GM12878 (cell line): ENCODE measurements at regions of chrX and their contacts with region 1.

Region 1: GRCh38 chrX:149539283-149540130 is 1.3 kb upstream of the EOLA1 start:
- DNase-seq: peak; percentile 83
- ATAC-seq: peak; percentile 74
- H3K4me3 ChIP-seq: peak overlapping the region; percentile 44; the same call in 1 of the 2 replicates
- H3K27ac ChIP-seq: peak overlapping the region; percentile 18; the same call in 1 of the 2 replicates
- H3K4me1 ChIP-seq: peaks cover 4% of the 10 kb centered on the region; the same call in 1 of the 2 replicates
- H3K27me3 ChIP-seq: no peaks in the 10 kb centered on the region
- CTCF ChIP-seq: no peak
- EP300 ChIP-seq: no peak
- POLR2A ChIP-seq: no peak; the same call in 1 of the 2 replicates
- RAD21 ChIP-seq: no peak

Region 2: DNA sequence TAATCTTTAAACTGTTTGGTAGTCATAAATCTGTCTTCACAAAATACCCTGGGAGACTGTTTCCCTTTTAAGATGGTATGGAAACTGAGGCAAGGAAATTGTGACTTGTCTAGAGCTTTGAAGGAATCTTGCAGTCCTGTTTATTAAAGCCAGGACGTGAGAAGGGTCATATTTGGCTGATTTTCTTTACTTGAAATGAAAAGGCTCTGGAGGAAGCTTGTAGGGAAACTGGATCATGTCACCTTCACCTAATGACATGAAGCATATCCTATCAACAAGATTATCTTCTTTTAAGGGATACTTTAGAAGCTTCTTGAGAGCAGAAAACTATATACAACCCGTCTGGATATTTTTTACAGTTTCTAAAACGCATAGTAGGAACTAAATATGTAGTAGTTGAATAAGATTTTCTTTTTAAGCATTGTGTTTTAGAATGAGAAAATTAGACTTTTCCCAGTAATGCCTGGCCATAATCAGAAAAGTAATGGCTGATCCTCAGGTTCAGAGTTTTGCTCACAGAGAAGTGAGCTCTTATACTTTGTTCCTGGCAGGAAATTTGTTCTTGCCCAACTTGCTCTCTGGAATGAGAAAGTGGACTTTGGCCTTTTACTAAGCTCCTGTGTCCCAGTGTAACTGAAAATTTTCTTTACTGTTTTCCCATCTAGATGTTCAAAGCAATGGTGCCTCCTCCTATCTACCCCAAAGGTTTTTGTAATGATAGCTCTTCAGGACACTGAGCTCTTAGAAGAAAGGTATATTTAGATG is 1175.9 kb before region 1 on chrX:
- CTCF ChIA-PET with region 1: no interaction called
- POLR2A ChIA-PET with region 1: no interaction called
- RAD21 ChIA-PET with region 1: no interaction called
- SMC1A ChIA-PET with region 1: no interaction called
- in situ Hi-C with region 1: no loop called
- intact Hi-C with region 1: no loop called
- DNase-seq: no peak
- ATAC-seq: no peak
- H3K4me3 ChIP-seq: no peak overlapping the region
- H3K27ac ChIP-seq: no peak overlapping the region
- H3K4me1 ChIP-seq: no peaks in the 10 kb centered on the region
- H3K27me3 ChIP-seq: no peaks in the 10 kb centered on the region
- CTCF ChIP-seq: no peak
- EP300 ChIP-seq: no peak
- POLR2A ChIP-seq: no peak
- RAD21 ChIP-seq: no peak

Region 3: DNA sequence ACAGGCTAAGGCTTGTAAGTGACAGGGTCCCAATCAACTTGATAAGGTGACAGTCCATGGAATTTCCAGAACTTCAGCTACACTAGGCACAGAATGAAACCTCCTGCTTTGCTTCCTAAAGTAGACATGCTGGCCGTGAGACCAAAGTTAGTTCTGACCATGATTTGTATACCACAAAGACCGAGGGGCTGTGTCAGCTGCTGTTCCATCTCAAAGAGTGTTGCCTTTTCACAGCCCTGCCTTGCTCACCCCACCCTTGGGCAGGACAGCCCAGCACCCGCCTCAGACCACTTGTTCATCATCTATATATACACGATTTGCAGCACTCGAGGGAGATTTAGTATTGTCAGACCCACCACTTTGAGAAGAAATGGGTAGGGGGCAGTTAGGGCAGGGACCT is 39.7 kb before region 1 on chrX:
- CTCF ChIA-PET with region 1: interaction called, 16 read pairs
- POLR2A ChIA-PET with region 1: interaction called, 12 read pairs
- RAD21 ChIA-PET with region 1: interaction called, 13 read pairs
- SMC1A ChIA-PET with region 1: interaction called, 3 read pairs
- in situ Hi-C with region 1: no loop called
- intact Hi-C with region 1: loop called (anchors 2 kb)
- DNase-seq: no peak
- ATAC-seq: no peak
- H3K4me3 ChIP-seq: no peak overlapping the region; the same call in 1 of the 2 replicates
- H3K27ac ChIP-seq: no peak overlapping the region
- H3K4me1 ChIP-seq: peaks cover 23% of the 10 kb centered on the region
- H3K27me3 ChIP-seq: no peaks in the 10 kb centered on the region
- CTCF ChIP-seq: no peak
- EP300 ChIP-seq: no peak
- POLR2A ChIP-seq: no peak
- RAD21 ChIP-seq: no peak

Region 4: DNA sequence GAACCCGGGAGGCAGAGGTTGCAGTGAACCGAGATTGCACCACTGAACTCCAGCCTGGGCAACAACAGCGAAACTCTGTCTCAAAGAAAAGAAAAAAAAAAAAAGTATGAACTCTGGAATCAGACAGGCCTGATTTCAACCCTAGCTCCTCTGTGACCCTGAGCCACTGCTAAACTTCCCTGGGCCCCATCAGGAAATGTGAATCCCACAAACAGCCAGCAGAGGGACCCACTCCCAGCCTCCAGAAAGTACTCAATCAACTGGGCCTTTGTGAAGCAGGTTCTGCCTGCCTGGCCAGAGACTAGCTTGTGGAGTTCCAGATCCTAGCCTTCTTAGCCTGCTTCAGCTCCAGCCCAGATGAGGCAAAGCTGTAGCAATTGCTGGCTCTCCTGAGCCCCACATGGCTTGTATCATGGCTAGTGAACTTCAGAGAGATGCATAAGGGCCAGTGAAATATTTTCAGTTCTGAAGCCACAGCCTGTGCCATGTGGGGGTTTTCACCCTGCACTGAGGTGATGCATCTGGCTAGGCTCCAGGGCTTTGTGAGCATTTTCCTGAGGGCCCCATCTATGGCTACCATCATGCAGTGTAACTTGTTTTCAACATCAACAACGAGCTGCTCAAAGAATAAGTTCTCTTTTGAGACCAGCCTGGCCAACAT is 27.2 kb before region 1 on chrX:
- CTCF ChIA-PET with region 1: interaction called, 29 read pairs
- POLR2A ChIA-PET with region 1: interaction called, 12 read pairs
- RAD21 ChIA-PET with region 1: interaction called, 27 read pairs
- SMC1A ChIA-PET with region 1: interaction called, 12 read pairs
- in situ Hi-C with region 1: no loop called
- intact Hi-C with region 1: loop called (anchors 1 kb)
- DNase-seq: peak; percentile 13
- ATAC-seq: peak; percentile 92
- H3K4me3 ChIP-seq: no peak overlapping the region
- H3K27ac ChIP-seq: peak overlapping the region; percentile 50; the same call in 1 of the 2 replicates
- H3K4me1 ChIP-seq: peaks cover 7% of the 10 kb centered on the region
- H3K27me3 ChIP-seq: no peaks in the 10 kb centered on the region; a peak in 2 of 4 replicates
- CTCF ChIP-seq: peak; percentile 61 to 72 (median 70)
- EP300 ChIP-seq: no peak
- POLR2A ChIP-seq: no peak
- RAD21 ChIP-seq: peak; percentile 61

Region 5: DNA sequence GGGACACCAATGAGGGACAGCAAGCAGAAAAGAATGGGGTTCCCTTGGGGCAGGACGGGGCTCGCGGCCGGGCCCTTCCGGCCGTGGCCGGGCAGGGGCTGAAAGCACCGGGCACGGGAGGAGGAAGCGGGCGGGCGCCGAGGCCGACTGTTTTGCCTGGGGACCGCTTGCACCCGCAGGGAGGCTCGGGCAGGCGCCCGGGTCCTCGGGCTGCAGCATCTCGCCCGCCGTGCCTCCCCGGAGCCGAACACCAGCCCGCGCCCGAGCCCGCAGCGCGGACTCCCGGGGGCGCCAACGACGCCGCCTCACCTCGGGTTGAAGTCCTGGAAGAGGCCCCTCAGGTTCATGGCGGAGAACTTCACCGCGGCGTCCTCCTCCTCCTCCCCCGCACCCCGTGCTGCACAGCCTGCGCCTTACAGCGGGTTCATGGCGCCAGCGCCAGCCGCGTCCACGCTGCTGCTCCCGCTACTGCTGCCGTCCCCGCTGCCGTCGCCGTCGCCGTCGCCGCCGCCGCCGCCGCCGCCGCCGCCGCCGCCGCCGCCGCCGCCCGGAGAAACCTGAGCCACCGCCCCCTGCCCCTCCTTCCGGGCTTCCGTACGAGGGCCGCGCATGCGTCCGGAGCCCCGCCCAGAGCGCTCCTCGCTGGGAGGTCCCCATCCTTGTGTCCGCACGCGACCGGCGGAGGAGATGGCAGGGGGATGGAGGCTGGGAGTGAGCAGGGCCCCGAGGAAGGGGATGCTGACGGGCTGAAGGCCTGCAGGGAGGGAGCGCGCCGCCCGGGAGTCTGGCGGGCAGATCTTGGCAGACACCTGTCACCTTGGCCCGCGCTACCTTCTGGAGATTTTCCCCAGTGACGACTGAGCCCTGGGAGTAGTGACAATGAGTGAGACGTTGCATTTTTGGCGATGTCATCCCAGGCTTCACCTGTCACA is 92.0 kb after region 1 on chrX and contains the start of gene TMEM185A:
- CTCF ChIA-PET with region 1: no interaction called
- POLR2A ChIA-PET with region 1: no interaction called
- RAD21 ChIA-PET with region 1: no interaction called
- SMC1A ChIA-PET with region 1: interaction called, 3 read pairs
- in situ Hi-C with region 1: no loop called
- intact Hi-C with region 1: loop called (anchors 1 kb)
- DNase-seq: no peak
- ATAC-seq: peak; percentile 86
- H3K4me3 ChIP-seq: peak within 1 kb of the TSS; percentile 66
- H3K27ac ChIP-seq: no peak within 1 kb of the TSS
- H3K4me1 ChIP-seq: no peaks in the 10 kb centered on the region
- H3K27me3 ChIP-seq: no peaks in the 10 kb centered on the region
- CTCF ChIP-seq: no peak
- EP300 ChIP-seq: no peak
- POLR2A ChIP-seq: peak; percentile 75
- RAD21 ChIP-seq: no peak
- polyA plus RNA-seq, gene TMEM185A: 2.4 to 3.9 TPM

Region 6: GRCh38 chrX:149938427-149939270 is 399.1 kb after region 1 on chrX and contains the start of gene EOLA2:
- CTCF ChIA-PET with region 1: interaction called, 4 read pairs
- POLR2A ChIA-PET with region 1: interaction called, 34 read pairs
- RAD21 ChIA-PET with region 1: interaction called, 49 read pairs
- SMC1A ChIA-PET with region 1: interaction called, 11 read pairs
- in situ Hi-C with region 1: no loop called
- intact Hi-C with region 1: loop called (anchors 10 kb)
- DNase-seq: peak; percentile 97
- ATAC-seq: peak; percentile 71
- H3K4me3 ChIP-seq: peak within 1 kb of the TSS; percentile 83
- H3K27ac ChIP-seq: peak within 1 kb of the TSS; percentile 69
- H3K4me1 ChIP-seq: no peaks in the 10 kb centered on the region
- H3K27me3 ChIP-seq: no peaks in the 10 kb centered on the region
- CTCF ChIP-seq: peak; percentile 53 to 61 (median 57); a peak in 5 of 6 replicates
- EP300 ChIP-seq: no peak
- POLR2A ChIP-seq: peak; percentile 47
- RAD21 ChIP-seq: no peak
- polyA plus RNA-seq, gene EOLA2: 26.9 to 37.0 TPM